MCF 10A (cell line): ENCODE measurements at regions of chr12 and their contacts with region 1.

Region 1: DNA sequence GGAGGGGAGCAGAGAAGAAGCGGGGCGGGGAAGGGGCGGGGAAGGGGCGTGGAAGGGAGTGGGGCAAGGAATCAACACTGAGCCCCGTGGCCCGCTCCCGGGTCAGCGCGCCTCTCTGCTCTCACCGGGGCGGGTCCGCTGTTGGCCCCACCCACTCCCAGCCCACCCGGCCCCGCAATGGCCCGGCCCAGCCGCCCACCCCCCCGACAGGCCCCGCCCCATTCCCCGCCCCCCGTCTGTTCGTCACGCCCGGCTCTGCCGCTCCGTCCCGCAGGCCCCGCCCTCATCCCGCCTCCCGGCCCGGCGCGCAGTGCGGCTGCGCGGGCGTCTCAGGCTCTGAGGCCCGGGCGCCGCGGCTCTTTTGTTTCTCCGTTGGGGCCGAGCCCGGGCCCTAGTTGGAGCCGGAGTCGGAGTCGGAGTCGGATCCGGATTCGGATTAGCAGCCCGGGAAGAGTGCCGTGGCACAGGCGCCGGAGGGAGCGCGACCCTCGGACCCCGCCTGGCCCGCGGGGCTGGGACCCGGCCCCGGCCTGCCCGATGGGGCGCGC is at the start of gene ULK1:
- DNase-seq: peak; percentile 86
- H3K4me3 Mint-ChIP-seq: peak within 1 kb of the TSS; percentile 80
- H3K27ac Mint-ChIP-seq: peak within 1 kb of the TSS; percentile 90
- H3K4me1 Mint-ChIP-seq: no peaks in the 10 kb centered on the region
- H3K27me3 Mint-ChIP-seq: no peaks in the 10 kb centered on the region
- CTCF ChIP-seq: no peak
- total RNA-seq, gene ULK1: 21.7 and 28.2 TPM in 2 replicates

Region 2: GRCh38 chr12:131830335-131830913 is 64.0 kb before region 1 on chr12:
- CTCF ChIA-PET with region 1: interaction called, 5 read pairs
- POLR2A ChIA-PET with region 1: interaction called, 4 read pairs
- intact Hi-C with region 1: loop called (anchors 2 kb)
- DNase-seq: peak; percentile 80
- H3K4me3 Mint-ChIP-seq: peak overlapping the region; percentile 67
- H3K27ac Mint-ChIP-seq: no peak overlapping the region
- H3K4me1 Mint-ChIP-seq: peaks cover 5% of the 10 kb centered on the region
- H3K27me3 Mint-ChIP-seq: no peaks in the 10 kb centered on the region
- CTCF ChIP-seq: peak; percentile 83

Region 3: DNA sequence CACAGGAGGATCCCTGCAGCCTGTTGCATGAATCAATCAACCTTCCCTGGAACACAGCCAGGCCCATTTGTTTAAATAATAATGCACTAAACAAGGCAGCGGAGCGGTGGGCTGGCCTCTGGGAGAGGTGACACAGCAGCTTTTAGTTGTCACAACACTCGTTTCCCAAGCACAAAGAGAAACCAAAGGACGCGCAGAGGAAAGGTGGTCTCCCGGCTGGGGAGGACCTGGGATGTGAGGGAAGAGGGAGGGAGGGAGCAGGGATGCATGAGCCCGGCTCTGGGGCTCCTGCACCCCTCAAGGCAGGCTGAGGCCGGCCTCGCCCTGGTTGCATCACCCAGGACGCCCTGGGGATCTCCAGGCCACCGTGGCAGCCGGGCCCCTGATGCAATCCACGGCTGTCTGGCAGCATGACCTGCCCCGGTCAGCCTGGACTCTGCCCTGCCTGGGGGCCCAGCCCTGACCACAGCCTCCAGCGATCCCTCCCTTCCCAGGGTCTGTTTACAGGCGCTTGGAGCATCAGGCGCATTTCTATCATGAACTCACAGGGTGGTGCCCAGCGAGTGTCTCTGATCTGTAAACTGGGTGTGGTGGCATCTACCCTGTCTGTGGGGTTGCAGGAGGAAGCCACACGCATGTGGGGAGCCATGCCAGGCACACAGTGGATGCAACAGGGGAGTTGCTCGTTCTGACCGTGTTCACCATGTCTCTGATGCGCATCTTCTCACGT is 33.7 kb before region 1 on chr12:
- CTCF ChIA-PET with region 1: no interaction called
- POLR2A ChIA-PET with region 1: interaction called, 8 read pairs
- intact Hi-C with region 1: loop called (anchors 1 kb)
- DNase-seq: peak; percentile 93
- H3K4me3 Mint-ChIP-seq: peak overlapping the region; percentile 59
- H3K27ac Mint-ChIP-seq: peak overlapping the region; percentile 96
- H3K4me1 Mint-ChIP-seq: peaks cover 39% of the 10 kb centered on the region
- H3K27me3 Mint-ChIP-seq: peaks cover 25% of the 10 kb centered on the region
- CTCF ChIP-seq: no peak

Region 4: DNA sequence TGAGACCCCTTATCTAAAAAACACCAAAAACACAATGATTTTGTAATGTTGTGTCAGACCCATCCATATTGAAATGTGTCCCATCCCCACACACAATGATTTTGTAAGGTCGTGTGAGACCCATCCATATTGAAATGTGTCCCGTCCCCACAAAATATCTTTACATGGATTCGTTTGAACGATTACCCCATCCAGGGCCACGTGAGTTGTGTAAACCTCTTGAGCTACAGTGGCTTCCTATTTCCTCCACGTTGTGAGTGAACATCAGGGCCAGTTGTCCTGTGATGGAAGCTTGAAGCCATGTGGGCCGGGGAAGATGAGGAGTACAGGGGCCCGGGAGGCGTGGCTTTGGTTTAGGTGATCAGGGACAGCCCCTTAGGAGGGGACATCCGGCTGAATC is 26.9 kb before region 1 on chr12:
- CTCF ChIA-PET with region 1: interaction called, 10 read pairs
- POLR2A ChIA-PET with region 1: interaction called, 8 read pairs
- intact Hi-C with region 1: no loop called
- DNase-seq: no peak
- H3K4me3 Mint-ChIP-seq: no peak overlapping the region
- H3K27ac Mint-ChIP-seq: no peak overlapping the region
- H3K4me1 Mint-ChIP-seq: peaks cover 23% of the 10 kb centered on the region
- H3K27me3 Mint-ChIP-seq: no peaks in the 10 kb centered on the region
- CTCF ChIP-seq: no peak

Region 5: DNA sequence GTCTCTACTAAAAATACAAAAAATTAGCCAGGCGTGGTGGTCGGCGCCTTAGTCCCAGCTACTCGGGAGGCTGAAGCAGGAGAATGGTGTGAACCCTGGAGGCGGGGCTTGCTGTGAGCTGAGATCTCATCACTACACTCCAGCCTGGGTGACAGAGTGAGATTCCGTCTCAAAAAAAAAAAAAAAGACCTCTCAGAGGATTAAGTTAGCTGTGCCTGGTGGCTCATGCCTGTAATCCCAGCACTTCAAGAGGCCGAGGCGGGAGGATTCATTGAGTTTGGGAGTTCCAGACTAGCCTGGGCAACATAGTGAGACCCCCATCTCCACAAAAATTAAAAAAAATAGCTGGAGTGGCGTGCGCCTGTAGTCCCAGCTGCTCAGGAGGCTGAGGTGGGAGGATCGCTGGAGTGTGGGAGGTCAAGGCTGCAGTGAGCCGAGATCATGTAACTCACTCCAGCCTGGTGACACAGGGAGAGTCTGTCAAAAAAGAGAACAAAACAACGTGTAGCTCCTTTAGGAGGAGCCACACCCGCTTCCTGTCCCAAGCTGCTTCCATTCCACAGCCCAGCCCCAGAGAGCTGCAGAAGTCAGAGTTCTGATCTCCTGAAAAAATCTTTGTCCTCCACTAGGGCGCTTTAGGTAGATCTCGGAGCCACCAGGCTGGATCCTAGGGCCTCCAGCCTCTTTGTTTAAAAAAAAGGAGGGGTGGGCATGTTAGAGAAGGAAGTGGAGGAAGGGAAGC is 11.4 kb before region 1 on chr12:
- CTCF ChIA-PET with region 1: interaction called, 4 read pairs
- POLR2A ChIA-PET with region 1: interaction called, 11 read pairs
- intact Hi-C with region 1: no loop called
- DNase-seq: no peak
- H3K4me3 Mint-ChIP-seq: peak overlapping the region; percentile 7
- H3K27ac Mint-ChIP-seq: peak overlapping the region; percentile 63
- H3K4me1 Mint-ChIP-seq: peaks cover 7% of the 10 kb centered on the region
- H3K27me3 Mint-ChIP-seq: no peaks in the 10 kb centered on the region
- CTCF ChIP-seq: no peak

Region 6: DNA sequence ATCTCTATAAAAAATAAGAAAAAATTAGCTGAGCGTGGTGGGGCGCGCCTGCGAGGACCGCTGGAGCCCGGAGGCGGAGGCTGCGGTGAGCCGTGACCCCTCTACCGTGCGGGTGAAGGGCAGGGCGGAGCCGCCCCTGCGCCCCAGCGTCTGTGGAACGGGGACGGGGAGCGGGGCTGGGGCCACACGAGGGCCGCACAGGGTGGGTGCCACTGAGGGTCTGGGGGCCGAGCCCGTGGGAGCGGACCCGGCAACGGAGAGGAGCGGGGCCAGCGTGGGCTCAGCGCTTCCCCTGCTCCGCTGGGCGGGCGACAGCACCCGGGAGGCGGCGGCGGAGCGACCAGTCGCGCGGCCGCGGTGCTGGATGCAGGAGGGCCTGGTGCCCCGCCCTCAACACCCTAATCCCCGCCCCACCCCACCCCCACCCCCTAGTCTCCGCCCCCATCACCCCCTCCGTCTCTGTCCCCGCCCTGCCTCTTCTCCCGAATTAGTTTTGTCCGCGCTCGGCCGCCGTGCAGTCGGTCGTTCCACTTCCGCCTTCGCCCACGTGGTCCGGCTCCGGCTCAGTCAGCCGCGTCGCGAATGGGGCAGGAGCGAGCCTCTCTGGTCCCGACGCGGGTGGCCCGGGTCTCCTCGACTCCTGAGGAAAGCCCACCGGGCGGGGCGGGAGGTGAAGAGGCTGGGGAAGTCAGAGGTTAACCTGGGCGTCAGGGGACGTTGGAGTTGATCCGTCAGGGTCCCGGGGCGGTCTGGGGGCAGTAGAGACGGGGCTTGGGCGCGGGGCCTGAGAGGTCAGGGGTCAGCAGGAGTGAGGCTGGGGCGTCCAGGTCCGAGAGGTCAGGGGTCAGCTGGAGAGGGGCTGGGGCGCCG is 34.6 kb after region 1 on chr12 and contains the start of gene PUS1:
- CTCF ChIA-PET with region 1: no interaction called
- POLR2A ChIA-PET with region 1: interaction called, 11 read pairs
- intact Hi-C with region 1: loop called (anchors 2 kb)
- DNase-seq: peak; percentile 94
- H3K4me3 Mint-ChIP-seq: peak within 1 kb of the TSS; percentile 93
- H3K27ac Mint-ChIP-seq: peak within 1 kb of the TSS; percentile 92
- H3K4me1 Mint-ChIP-seq: no peaks in the 10 kb centered on the region
- H3K27me3 Mint-ChIP-seq: no peaks in the 10 kb centered on the region
- CTCF ChIP-seq: no peak
- total RNA-seq, gene PUS1: 44.1 and 72.3 TPM in 2 replicates

Region 7: GRCh38 chr12:131941116-131941986 is 47.0 kb after region 1 on chr12:
- CTCF ChIA-PET with region 1: no interaction called
- POLR2A ChIA-PET with region 1: interaction called, 14 read pairs
- intact Hi-C with region 1: no loop called
- DNase-seq: no peak
- H3K4me3 Mint-ChIP-seq: no peak overlapping the region
- H3K27ac Mint-ChIP-seq: peak overlapping the region; percentile 92
- H3K4me1 Mint-ChIP-seq: peaks cover 12% of the 10 kb centered on the region
- H3K27me3 Mint-ChIP-seq: no peaks in the 10 kb centered on the region
- CTCF ChIP-seq: no peak